Prostate gland (tissue), 2 donors: ENCODE measurements at regions of chr15 and their contacts with region 1.

Region 1: DNA sequence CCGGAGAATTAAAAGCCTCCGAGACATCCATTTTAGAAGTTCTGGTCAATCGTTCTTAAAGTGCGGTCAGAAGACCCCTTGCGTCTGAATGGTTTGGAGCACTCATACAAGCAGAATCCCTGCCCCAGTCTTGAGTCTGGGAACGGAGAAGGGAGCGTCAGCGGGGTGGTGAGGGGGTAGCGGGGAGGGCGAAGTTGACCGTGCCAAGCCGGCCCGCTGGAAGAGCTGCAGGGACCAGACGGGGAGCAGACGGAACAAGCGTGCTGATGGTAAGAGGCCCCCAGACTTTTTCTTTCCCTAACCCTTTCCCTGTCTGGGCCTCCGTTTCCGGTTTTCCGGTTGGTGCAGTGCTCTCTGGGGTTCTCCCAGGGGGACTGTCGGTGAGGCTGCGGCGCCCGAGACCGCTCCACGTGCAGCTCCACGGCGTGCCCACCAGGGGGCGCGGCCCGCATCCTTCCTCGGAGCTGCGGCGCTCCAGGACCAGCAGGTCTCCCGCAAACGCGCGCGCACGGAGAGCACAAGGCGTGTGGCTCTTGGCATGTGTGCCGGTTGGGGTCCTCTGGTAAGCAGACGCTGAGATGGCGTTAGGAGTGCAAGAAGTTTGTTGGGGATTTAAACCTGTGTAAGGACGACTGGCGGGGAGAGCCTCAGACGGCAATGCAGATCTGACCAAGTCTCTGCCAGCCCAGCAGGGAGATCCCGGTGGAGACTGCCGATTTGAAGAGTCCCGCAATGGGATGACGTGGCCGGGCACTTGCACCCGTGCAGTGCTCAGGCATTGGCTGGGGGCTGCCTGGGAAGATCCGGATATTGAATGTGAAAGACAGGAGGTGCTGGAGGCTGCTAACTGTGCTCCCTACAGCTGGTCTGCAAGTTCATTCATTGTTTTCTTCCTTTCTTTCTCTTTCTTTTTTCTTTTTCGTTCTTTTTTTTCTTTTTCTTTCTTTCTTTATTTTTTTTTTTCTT is 19.2 kb upstream of the CORO2B start:
- DNase-seq: peak; percentile 47
- H3K4me3 ChIP-seq: peak overlapping the region; percentile 15 to 25
- H3K27ac ChIP-seq: no peak overlapping the region
- H3K4me1 ChIP-seq: no peaks in the 10 kb centered on the region
- H3K27me3 ChIP-seq: no peaks in the 10 kb centered on the region
- CTCF ChIP-seq: peak; percentile 90 to 97 (median 92)
- POLR2A ChIP-seq: no peak

Region 2: GRCh38 chr15:68924866-68925560 is 365.4 kb after region 1 on chr15:
- intact Hi-C with region 1: loop called (anchors 5 kb)
- DNase-seq: peak; percentile 63
- H3K4me3 ChIP-seq: no peak overlapping the region
- H3K27ac ChIP-seq: no peak overlapping the region
- H3K4me1 ChIP-seq: no peaks in the 10 kb centered on the region
- H3K27me3 ChIP-seq: no peaks in the 10 kb centered on the region
- CTCF ChIP-seq: peak; percentile 16 to 73 (median 68)
- POLR2A ChIP-seq: no peak